ENCODE measurements at regions of chr3 and their contacts with region 1.

Region 1: GRCh38 chr3:52907497-52907896 is 10.1 kb upstream of the STIMATE start:
- DNase-seq: no peak
- H3K4me3 ChIP-seq: no peak overlapping the region
- H3K27ac ChIP-seq: no peak overlapping the region
- H3K4me1 ChIP-seq: no peaks in the 10 kb centered on the region
- H3K27me3 ChIP-seq: no peaks in the 10 kb centered on the region
- CTCF ChIP-seq: no peak

Region 2: GRCh38 chr3:52973806-52974205 is 66.3 kb after region 1 on chr3:
- CTCF ChIA-PET with region 1: no interaction called
- dilution Hi-C with region 1: loop called (anchors 5 kb)
- in situ Hi-C with region 1: no loop called
- intact Hi-C with region 1: no loop called
- DNase-seq: no peak
- H3K4me3 ChIP-seq: no peak overlapping the region
- H3K27ac ChIP-seq: no peak overlapping the region
- H3K4me1 ChIP-seq: no peaks in the 10 kb centered on the region
- H3K27me3 ChIP-seq: no peaks in the 10 kb centered on the region
- CTCF ChIP-seq: no peak